ENCODE measurements at regions of chr12 and their contacts with region 1.

Region 1: DNA sequence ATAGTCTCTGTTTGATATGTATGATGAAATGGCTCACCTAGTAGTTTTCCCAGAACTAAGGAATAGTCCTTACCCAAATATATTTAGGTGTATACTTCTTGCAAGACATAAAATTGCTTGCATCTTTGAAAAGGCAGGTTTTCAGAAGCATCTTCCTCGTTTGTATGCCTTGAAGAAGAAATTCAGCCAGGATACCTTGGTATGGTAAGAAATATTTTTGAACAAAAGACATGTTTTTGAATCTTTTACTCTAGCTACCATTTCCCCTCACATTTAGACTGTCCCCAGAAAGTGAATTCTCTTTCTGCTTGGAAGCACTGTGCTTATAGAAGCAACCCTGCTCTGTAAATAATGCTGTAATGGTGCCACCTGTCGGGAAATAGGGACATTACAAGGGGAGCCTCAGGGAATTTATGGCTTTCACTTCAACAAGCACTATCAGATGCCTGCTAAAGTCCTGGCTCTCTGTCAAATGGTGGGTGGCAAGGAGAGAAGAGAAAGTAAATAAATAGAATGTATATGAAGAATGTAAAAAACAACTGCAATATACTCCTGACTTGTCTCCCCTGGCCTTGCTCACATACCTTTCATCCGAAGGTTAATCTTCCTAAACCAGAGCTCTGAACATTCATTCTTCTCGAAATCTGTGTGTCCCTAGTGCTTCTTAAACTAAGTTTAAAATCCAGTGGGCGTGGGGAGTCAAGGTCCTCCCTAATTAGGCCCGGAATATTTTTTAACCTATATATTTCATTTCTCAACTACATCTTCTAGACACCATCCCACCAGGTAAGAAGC is 6.1 kb downstream of the CCDC184 start:
- DNase-seq: peak; percentile 81
- ATAC-seq: peak; percentile 88
- H3K4me3 ChIP-seq: no peak overlapping the region
- H3K4me3 Mint-ChIP-seq: no peak overlapping the region
- H3K27ac ChIP-seq: no peak overlapping the region
- H3K27ac Mint-ChIP-seq: no peak overlapping the region
- H3K4me1 ChIP-seq: peaks cover 12% of the 10 kb centered on the region in 2 donors
- H3K4me1 Mint-ChIP-seq: peaks cover 11% of the 10 kb centered on the region
- H3K27me3 ChIP-seq: peaks cover 0 to 15% (median 5%) of the 10 kb centered on the region in 4 experiments
- H3K27me3 Mint-ChIP-seq: peaks cover 21% of the 10 kb centered on the region
- CTCF ChIP-seq: peak; percentile 93

Region 2: GRCh38 chr12:47904713-47905310 is 284.7 kb before region 1 on chr12 and contains the start of gene VDR:
- CTCF ChIA-PET with region 1: no interaction called
- POLR2A ChIA-PET with region 1: no interaction called
- intact Hi-C with region 1: loop called (anchors 1 kb)
- DNase-seq: peak; percentile 77
- ATAC-seq: peak; percentile 85
- H3K4me3 ChIP-seq: peak within 1 kb of the TSS; percentile 55 to 82 (median 64)
- H3K4me3 Mint-ChIP-seq: peak within 1 kb of the TSS; percentile 90
- H3K27ac ChIP-seq: peak within 1 kb of the TSS in 1 of 2 donors; percentile 6
- H3K27ac Mint-ChIP-seq: peak within 1 kb of the TSS; percentile 54
- H3K4me1 ChIP-seq: peaks cover 26 to 34% of the 10 kb centered on the region in 2 donors
- H3K4me1 Mint-ChIP-seq: peaks cover 36% of the 10 kb centered on the region
- H3K27me3 ChIP-seq: peaks cover 0 to 57% (median 21%) of the 10 kb centered on the region in 4 experiments
- H3K27me3 Mint-ChIP-seq: peaks cover 26% of the 10 kb centered on the region
- CTCF ChIP-seq: no peak
- total RNA-seq, gene VDR: 0.37 and 0.53 TPM in 2 replicates

Region 3: GRCh38 chr12:47941851-47942601 is 247.5 kb before region 1 on chr12:
- CTCF ChIA-PET with region 1: no interaction called
- POLR2A ChIA-PET with region 1: no interaction called
- intact Hi-C with region 1: no loop called
- DNase-seq: peak; percentile 66
- ATAC-seq: peak; percentile 53
- H3K4me3 ChIP-seq: no peak overlapping the region
- H3K4me3 Mint-ChIP-seq: no peak overlapping the region
- H3K27ac ChIP-seq: no peak overlapping the region
- H3K27ac Mint-ChIP-seq: no peak overlapping the region
- H3K4me1 ChIP-seq: peaks cover 0 to 4% of the 10 kb centered on the region in 2 donors
- H3K4me1 Mint-ChIP-seq: peaks cover 2% of the 10 kb centered on the region
- H3K27me3 ChIP-seq: peaks cover 0 to 8% (median 4%) of the 10 kb centered on the region in 4 experiments
- H3K27me3 Mint-ChIP-seq: peaks cover 37% of the 10 kb centered on the region
- CTCF ChIP-seq: peak; percentile 40

Region 4: GRCh38 chr12:48084066-48084465 is 105.5 kb before region 1 on chr12:
- CTCF ChIA-PET with region 1: interaction called, 14 read pairs
- POLR2A ChIA-PET with region 1: no interaction called
- intact Hi-C with region 1: no loop called
- DNase-seq: peak; percentile 26
- ATAC-seq: no peak
- H3K4me3 ChIP-seq: no peak overlapping the region
- H3K4me3 Mint-ChIP-seq: no peak overlapping the region
- H3K27ac ChIP-seq: no peak overlapping the region
- H3K27ac Mint-ChIP-seq: no peak overlapping the region
- H3K4me1 ChIP-seq: peaks cover 0 to 9% of the 10 kb centered on the region in 2 donors
- H3K4me1 Mint-ChIP-seq: peaks cover 5% of the 10 kb centered on the region
- H3K27me3 ChIP-seq: no peaks in the 10 kb centered on the region
- H3K27me3 Mint-ChIP-seq: no peaks in the 10 kb centered on the region
- CTCF ChIP-seq: peak; percentile 35

Region 5: DNA sequence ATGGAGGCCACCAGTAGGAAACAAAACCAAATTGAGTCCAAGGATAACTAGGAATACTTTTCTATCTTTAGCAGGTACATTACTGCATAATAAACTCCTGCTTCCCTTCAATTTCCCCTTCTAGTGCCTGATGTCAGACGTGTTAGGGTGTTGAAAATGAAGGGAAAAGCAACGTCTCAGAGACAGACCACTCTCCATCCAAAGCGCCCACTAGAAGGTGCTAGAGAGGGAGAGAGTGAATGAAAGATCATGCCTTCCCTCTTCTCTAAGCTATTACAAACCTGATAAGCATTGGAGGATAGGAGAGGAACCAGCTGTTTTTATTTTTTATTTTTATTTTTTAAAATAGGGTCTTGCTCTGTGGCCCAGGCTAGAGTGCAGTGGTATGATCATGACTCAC is 97.1 kb after region 1 on chr12:
- CTCF ChIA-PET with region 1: no interaction called
- POLR2A ChIA-PET with region 1: no interaction called
- intact Hi-C with region 1: no loop called
- DNase-seq: peak; percentile 9
- ATAC-seq: no peak
- H3K4me3 ChIP-seq: no peak overlapping the region
- H3K4me3 Mint-ChIP-seq: no peak overlapping the region
- H3K27ac ChIP-seq: no peak overlapping the region
- H3K27ac Mint-ChIP-seq: no peak overlapping the region
- H3K4me1 ChIP-seq: peaks cover 0 to 5% of the 10 kb centered on the region in 2 donors
- H3K4me1 Mint-ChIP-seq: peaks cover 10% of the 10 kb centered on the region
- H3K27me3 ChIP-seq: peaks cover 0 to 4% (median 2%) of the 10 kb centered on the region in 4 experiments
- H3K27me3 Mint-ChIP-seq: peaks cover 40% of the 10 kb centered on the region
- CTCF ChIP-seq: peak; percentile 30